ENCODE measurements at regions of chr4 and their contacts with region 1.

Region 1: DNA sequence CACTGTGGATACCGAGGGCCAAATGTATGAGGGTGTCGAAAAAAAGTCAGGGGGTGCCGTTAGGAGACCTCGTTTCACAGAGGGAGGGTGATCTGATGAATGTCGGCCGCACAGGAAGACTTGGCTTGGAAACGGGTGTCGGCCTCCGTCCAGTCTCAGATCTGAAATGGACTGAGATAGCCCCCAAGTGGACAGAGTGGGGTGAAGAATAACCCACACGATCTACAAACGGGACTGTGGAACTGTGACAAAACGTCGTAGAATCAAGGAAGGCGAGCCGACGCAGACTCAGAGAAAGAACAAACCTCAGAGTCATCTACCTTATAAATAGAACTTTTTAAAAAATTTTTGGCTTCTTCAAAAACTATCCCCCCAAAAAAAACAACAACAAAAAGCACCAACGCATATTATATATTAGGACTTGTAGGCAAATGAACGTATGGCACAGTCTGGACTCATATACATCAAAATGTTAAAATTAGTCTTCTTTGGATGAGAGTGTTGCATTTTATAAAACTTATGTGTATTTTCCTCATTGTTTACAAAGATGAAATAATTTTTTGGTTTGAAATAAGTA is 63.8 kb upstream of the IRF2 start:
- DNase-seq: peak; percentile 79
- H3K4me3 ChIP-seq: peak overlapping the region; percentile 72 to 90
- H3K27ac ChIP-seq: peak overlapping the region; percentile 96
- H3K4me1 ChIP-seq: peaks cover 4 to 8% of the 10 kb centered on the region in 2 experiments; a peak in 3 of 4 replicates
- H3K27me3 ChIP-seq: no peaks in the 10 kb centered on the region
- CTCF ChIP-seq: peak; percentile 78
- EP300 ChIP-seq: no peak
- RAD21 ChIP-seq: peak; percentile 98

Region 2: DNA sequence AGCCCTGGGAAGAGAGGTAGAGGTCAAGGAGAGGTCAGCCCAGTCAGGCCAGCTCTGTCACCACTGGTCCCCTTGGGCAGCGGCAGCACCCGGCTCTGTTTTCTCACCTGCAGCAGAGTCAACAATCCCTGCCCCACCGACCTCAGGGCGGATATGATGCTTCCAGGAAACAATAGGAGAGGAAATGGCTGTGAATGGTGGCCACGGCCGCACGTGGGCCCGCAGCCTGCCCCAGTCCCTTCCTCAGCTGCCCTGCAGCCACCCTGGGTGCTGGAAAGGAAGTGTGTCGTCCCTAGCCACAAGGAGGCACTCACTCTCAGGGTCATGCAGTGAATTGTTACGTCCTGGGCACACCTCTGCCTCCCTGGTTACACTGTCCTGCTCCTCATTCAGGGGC is 227.9 kb before region 1 on chr4:
- CTCF ChIA-PET with region 1: no interaction called
- POLR2A ChIA-PET with region 1: no interaction called
- DNase-seq: no peak
- H3K4me3 ChIP-seq: no peak overlapping the region
- H3K27ac ChIP-seq: no peak overlapping the region
- H3K4me1 ChIP-seq: no peaks in the 10 kb centered on the region
- H3K27me3 ChIP-seq: no peaks in the 10 kb centered on the region
- CTCF ChIP-seq: no peak
- EP300 ChIP-seq: no peak
- RAD21 ChIP-seq: no peak

Region 3: DNA sequence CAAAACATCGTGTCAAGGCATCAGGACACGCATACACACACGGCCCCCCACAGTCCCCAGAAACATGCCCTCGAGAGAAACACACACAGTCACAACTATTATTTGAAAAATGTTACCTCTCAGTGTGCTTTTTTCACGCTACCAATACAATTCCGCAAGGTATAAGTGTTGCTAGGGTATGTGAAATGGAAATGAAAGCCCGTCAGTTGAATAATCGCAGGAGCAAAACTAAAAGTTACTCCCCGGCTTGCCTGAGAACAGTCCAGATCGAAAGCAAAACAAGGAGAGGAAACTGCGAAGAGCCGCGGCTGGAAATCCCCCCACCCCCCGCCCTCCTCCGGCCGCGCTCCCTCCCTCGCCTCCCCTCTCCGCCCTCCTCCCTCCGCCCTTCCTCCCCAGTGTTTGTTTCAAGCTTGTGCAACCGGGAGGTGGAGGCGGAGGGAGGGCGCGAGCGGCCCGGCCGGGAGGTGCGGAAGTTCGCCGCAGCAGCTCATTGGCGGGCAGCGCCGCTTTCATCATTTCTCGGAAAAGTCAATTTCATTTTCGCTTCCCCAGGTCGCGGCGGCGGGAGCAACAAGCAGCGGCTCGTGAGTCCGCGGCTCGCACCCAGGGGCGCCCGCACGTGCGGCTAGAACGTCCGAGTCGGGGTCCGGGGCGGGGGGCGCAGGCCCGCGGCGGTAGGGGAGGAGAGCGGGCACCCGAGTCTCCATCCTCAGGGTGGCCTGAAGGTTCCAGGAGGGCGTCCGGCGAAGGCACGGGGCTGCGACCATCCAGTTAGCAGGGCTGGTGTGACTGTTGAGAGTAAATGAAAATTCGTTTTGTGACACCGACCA is 63.6 kb before region 1 on chr4 and contains the start of gene IRF2:
- CTCF ChIA-PET with region 1: interaction called, 3 read pairs
- POLR2A ChIA-PET with region 1: interaction called, 11 read pairs
- DNase-seq: peak; percentile 99
- H3K4me3 ChIP-seq: peak within 1 kb of the TSS; percentile 60 to 75
- H3K27ac ChIP-seq: peak within 1 kb of the TSS; percentile 90 to 97
- H3K4me1 ChIP-seq: peaks cover 0 to 28% of the 10 kb centered on the region in 2 experiments; a peak in 2 of 4 replicates
- H3K27me3 ChIP-seq: no peaks in the 10 kb centered on the region
- CTCF ChIP-seq: no peak
- EP300 ChIP-seq: peak in 1 of 2 experiments; percentile 39; a peak in 1 of 4 replicates
- RAD21 ChIP-seq: no peak
- polyA plus RNA-seq, gene IRF2: 23.3 and 23.6 TPM in 2 replicates

Measured in SK-N-SH (cell line).